Transverse colon (tissue), 4 donors: ENCODE measurements at regions of chr5 and their contacts with region 1.

Region 1: DNA sequence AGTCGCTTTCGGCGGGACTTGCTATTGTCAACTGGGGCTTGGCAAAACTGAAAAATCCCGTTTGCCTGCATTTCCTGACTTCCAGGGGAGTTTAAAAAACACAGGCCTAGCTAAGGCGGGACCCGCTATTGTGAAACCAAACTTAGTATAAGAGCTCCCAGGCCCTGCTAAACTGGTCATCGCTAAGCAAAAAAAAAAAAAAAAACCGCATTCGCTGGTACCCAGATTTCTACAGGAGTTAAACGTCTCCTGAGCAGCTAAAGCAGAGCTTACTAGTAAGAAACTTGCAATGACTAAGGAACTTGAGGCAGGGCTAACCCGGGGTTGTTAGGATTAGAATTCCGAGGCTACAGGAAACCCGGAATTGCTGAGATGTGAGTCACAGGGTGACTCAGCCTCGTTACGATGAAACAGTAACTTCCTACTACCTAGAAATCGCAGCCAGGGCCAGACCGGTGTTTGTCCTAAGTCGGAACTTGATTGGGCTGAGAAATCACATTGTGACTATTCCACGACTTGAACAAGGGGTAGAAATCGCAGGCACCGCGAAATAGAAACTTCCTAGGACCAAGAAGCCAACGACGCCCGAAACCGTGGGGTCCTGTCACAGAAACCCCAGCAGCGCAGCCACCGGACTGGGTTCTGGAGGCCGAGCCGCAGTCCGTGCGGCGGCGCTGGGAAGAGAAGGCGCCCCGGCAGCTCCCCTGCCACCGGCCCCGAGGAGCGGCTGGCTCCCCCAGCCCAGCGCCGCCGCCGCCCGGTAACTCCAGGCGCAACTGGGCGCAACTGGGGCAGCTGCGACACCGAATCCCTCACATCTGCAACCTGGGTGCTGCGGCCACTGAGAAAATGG is 89.5 kb downstream of the ANXA2R start:
- DNase-seq: peak; percentile 84
- H3K4me3 ChIP-seq: peak overlapping the region; percentile 18 to 85 (median 48)
- H3K27ac ChIP-seq: peak overlapping the region; percentile 83 to 95 (median 87)
- H3K4me1 ChIP-seq: peaks cover 11 to 46% (median 28%) of the 10 kb centered on the region in 4 donors
- H3K27me3 ChIP-seq: peaks cover 100% of the 10 kb centered on the region
- CTCF ChIP-seq: no peak
- EP300 ChIP-seq: no peak
- POLR2A ChIP-seq: peak; percentile 48

Region 2: GRCh38 chr5:42994246-42995151 is 43.8 kb after region 1 on chr5:
- in situ Hi-C with region 1: loop called in 1 of 4 experiments (anchors 5 kb)
- intact Hi-C with region 1: no loop called
- DNase-seq: peak; percentile 91
- H3K4me3 ChIP-seq: peak overlapping the region; percentile 1 to 81 (median 18)
- H3K27ac ChIP-seq: peak overlapping the region; percentile 88 to 95 (median 92)
- H3K4me1 ChIP-seq: peaks cover 0 to 34% (median 10%) of the 10 kb centered on the region in 4 donors
- H3K27me3 ChIP-seq: peaks cover 100% of the 10 kb centered on the region
- CTCF ChIP-seq: peak; percentile 82 to 94 (median 90)
- EP300 ChIP-seq: no peak
- POLR2A ChIP-seq: peak; percentile 44

Region 3: DNA sequence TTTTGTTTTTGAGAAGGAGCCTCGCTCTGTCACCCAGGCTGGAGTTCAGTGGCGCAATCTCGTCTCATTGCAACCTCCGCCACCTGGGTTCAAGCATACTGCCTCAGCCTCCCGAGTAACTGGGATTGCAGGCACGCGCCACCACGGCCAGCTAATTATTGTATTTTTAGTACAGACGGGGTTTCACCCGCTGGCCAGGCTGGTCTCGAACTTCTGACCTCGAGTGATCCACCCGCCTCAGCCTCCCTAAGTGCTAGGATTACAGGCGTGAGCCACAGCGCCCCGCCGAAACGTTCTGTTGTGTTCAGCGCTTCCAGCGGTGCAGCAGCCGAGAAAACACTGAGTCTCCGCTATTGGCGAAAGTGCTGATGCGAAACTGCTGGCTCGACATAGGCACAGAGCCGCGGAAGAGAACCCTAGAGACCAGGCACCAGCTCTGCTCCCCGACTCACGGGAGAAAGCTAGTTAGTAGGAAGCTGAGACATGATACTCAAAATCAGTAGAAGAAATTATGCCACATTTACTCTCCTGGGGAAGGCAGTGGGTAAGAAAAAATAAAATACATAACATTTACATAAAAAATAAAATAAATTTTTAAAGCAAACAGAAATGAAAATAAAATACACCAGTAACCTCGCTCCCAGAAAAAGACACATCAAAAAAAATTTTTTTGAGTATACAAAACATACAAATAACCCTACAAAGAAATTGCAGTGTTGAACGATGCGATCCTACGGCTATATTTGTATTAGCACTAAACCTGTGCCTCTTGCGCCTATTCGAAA is 57.9 kb after region 1 on chr5:
- in situ Hi-C with region 1: loop called in 1 of 4 experiments (anchors 10 kb)
- intact Hi-C with region 1: no loop called
- DNase-seq: peak; percentile 94
- H3K4me3 ChIP-seq: peak overlapping the region; percentile 16 to 59 (median 38)
- H3K27ac ChIP-seq: peak overlapping the region; percentile 87 to 92 (median 90)
- H3K4me1 ChIP-seq: peaks cover 0 to 15% (median 4%) of the 10 kb centered on the region in 4 donors
- H3K27me3 ChIP-seq: peaks cover 53% of the 10 kb centered on the region
- CTCF ChIP-seq: no peak
- EP300 ChIP-seq: no peak
- POLR2A ChIP-seq: peak; percentile 86

Region 4: DNA sequence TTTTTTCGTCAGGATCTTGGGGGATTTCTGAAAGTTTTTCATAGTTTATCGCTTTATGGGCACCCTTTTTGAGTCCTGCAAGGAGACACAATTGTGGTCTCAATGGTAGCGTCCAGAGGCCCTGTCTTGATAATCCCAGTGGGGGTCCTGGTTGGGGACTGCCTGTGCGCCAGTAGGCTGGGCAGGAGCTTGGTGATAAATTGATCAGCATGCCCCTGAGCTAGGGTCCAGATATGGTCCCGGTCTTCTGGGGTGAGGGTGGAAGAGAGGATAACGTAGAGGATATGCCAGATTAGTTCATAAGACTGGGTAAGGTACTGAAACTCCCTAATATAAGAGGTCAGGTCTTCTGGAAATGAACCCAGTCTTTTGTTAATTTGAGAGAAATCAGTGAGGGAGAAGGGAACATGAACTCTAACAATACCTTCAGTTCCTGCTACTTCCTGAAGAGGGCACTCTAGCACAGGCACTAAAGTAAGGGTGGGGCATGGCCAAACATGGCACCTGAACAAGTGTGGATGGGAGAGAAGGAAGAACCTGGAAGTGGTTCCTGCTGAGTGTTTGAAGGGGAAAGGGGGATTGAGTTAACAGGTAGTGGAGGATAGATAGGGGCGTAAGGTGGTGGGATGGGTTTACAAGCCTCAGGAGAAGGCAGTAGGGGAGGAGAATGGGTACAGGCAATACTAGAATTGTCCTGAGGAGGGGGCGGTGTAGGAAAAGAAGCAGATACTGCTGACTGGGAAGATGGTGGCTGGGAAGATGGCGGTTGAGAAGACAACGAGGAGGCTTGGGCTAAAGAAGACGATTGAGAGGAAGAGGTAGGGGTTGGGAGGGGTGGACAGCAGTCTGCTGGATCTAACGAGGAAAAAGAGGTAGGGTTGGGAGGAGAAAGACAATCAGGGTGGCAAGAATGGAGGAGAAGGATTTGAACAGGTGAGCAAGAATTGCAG is 123.2 kb after region 1 on chr5:
- in situ Hi-C with region 1: no loop called
- intact Hi-C with region 1: no loop called
- DNase-seq: peak; percentile 37
- H3K4me3 ChIP-seq: no peak overlapping the region
- H3K27ac ChIP-seq: no peak overlapping the region
- H3K4me1 ChIP-seq: peaks cover 4 to 15% (median 6%) of the 10 kb centered on the region in 4 donors
- H3K27me3 ChIP-seq: no peaks in the 10 kb centered on the region
- CTCF ChIP-seq: peak; percentile 52 to 68 (median 60)
- EP300 ChIP-seq: no peak
- POLR2A ChIP-seq: no peak

Region 5: DNA sequence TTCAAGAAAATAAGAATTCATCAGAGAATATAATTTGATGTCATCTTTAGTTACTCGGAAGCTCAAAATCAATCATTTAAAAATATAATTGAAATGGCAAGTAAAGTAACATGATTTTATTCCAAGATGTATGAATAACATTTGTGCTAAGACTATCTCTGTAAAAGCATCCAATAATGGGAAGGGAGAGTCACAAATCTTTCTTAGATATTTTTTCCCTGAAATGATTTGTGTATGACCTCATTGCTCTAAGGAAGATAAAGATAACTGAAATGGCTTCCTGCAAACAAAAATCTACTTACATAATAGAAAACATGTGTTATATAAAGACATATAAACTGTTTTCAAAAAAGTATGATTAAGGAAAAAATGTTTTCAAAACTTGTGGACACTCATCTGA is 1535.9 kb after region 1 on chr5:
- in situ Hi-C with region 1: no loop called
- intact Hi-C with region 1: no loop called
- DNase-seq: no peak
- H3K4me3 ChIP-seq: no peak overlapping the region
- H3K27ac ChIP-seq: no peak overlapping the region
- H3K4me1 ChIP-seq: no peaks in the 10 kb centered on the region
- H3K27me3 ChIP-seq: no peaks in the 10 kb centered on the region
- CTCF ChIP-seq: no peak
- EP300 ChIP-seq: no peak
- POLR2A ChIP-seq: no peak